ENCODE measurements at regions of chr10 and their contacts with region 1.

Region 1: GRCh38 chr10:14822879-14823755 is 14.7 kb downstream of the CDNF start:
- DNase-seq: no peak
- ATAC-seq: peak; percentile 49
- H3K4me3 Mint-ChIP-seq: no peak overlapping the region
- H3K27ac Mint-ChIP-seq: no peak overlapping the region
- H3K4me1 Mint-ChIP-seq: peaks cover 4% of the 10 kb centered on the region
- H3K27me3 Mint-ChIP-seq: peaks cover 13% of the 10 kb centered on the region

Region 2: DNA sequence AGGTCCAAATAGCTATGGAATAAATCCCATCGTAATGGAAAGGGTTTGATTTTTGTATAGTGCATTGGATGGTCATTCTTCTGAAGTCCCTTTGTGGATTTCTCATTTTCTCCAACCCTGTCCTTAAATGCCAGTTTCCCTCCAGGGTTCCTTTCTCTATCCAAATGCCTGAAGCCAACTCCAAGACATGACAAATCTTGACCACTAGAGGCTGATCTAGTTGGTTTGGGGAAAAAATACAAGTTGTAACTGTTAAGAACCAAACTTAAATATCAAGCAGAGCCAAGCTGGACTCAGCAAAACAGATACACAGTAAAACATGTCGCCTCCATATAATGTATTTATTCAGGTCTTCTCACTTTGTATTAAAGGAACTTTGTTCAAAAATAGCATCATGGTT is 521.1 kb before region 1 on chr10:
- CTCF ChIA-PET with region 1: no interaction called
- DNase-seq: no peak
- ATAC-seq: no peak
- H3K4me3 Mint-ChIP-seq: no peak overlapping the region
- H3K27ac Mint-ChIP-seq: no peak overlapping the region
- H3K4me1 Mint-ChIP-seq: no peaks in the 10 kb centered on the region
- H3K27me3 Mint-ChIP-seq: peaks cover 21% of the 10 kb centered on the region

Region 3: DNA sequence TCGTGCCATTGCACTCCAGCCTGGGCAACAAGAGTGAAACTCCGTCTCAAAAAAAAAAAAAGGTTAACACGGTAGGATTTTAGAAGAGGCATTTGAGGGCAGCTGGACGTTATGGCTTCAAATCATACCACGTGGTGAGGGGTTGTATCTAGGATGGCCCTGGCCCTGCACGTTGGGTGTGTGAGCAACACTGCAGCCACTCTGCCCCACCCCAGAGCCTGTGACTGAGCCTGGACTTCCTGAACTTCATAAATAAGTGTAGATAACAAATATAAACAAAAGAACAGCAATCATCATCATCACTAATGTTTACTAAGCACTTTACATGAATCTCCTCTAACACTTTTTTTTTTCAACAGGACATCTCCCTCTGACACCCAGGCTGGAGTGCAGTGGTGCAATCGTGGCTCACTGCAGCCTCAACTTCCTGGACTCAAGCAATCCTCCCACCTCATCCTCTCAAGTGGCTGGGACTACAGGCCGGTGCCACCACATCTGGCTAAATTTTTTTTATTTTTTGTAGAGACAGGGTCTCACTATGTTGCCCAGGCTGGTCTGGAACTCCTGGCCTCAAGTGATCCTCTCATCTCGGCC is 322.8 kb before region 1 on chr10:
- CTCF ChIA-PET with region 1: interaction called, 15 read pairs
- DNase-seq: no peak
- ATAC-seq: no peak
- H3K4me3 Mint-ChIP-seq: no peak overlapping the region
- H3K27ac Mint-ChIP-seq: no peak overlapping the region
- H3K4me1 Mint-ChIP-seq: peaks cover 13% of the 10 kb centered on the region
- H3K27me3 Mint-ChIP-seq: peaks cover 12% of the 10 kb centered on the region

Region 4: DNA sequence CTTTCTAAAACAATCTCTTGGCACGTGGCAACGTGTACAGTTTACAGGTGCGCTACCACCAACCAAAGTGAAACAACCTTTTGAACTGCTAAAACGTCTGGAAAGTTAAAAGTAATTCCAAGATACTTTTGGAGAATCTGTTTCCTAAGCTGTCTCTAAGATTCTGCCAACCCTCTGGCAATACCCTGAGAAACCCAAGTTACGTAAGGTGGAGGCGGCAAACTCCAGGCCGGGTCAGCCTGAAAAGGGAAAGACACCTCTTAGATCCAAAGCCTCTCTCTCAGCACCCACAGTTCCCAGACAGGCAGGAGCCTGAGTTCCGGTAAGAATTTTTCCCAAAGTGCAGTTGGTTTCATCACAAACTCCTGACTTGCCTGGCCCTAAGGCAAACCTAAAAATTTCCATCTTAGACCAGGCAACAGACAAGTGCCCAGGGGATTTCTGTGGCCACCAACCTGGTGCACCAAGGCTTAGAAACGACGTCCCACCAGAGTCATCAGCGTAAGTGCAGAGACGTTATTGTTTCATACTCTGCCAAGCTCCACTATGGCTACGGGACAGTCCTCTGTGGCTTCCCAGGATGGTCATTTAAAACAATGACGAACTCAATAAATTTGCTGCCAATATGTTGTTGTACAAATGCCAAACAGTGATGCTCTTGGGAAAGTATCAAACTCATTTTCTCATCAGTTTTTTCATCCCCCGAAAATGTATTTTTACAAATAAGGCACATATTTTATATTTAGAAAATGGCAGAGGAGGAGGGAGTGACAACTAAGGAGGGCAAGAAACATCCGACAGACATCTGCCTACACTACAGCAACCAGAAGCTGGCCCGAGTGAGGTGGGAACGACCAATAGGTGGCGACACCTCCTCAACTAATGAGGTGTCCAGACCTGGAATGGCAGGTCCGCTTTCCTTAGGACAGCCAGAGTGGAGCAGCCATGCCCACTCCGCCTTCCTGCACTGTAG is 286.6 kb before region 1 on chr10:
- CTCF ChIA-PET with region 1: interaction called, 22 read pairs
- DNase-seq: peak; percentile 59
- ATAC-seq: peak; percentile 47
- H3K4me3 Mint-ChIP-seq: no peak overlapping the region
- H3K27ac Mint-ChIP-seq: no peak overlapping the region
- H3K4me1 Mint-ChIP-seq: peaks cover 36% of the 10 kb centered on the region
- H3K27me3 Mint-ChIP-seq: no peaks in the 10 kb centered on the region